Naive thymus-derived CD4-positive, alpha-beta T cell (primary cell): ENCODE measurements at regions of chr14 and their contacts with region 1.

Region 1: DNA sequence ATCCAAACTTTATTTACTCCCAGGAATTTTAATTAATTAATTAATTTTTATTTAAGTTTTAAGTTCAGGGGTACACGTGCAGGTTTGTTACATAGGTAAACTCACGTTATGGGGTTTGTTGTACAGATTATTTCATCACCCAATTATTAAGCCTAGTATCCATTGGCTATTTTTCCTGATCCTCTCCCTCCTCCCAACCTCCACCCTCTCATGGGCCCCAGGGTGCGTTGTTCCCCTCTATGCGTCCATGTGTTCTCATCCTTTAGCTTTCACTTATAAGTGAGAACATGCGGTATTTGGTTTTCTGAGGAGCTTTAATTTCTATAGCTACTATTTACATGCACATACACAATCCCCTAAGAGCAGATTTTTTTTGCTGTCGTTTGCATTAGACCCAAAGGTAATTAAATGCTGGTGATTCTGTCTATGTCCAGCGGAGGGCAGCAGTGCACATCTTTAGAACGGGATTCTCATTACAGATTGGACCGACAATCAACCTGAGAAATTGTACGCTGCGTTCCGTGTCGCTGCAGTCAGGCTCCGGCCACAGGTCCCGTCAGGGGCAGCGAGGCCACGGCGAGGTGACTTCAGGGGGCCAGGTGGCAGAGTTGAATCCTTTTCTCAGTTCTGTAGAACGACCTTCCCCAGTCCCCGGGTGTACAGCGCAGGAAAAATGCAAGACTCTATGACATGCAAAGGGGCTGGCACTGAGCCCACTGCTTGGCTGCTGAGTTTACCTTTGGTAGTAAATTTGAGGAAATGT is 11.6 kb downstream of the TMEM30B start:
- DNase-seq: peak; percentile 47 to 78 (median 71)
- ATAC-seq: peak; percentile 96
- H3K4me3 ChIP-seq: peak overlapping the region; percentile 58
- H3K4me3 Mint-ChIP-seq: peak overlapping the region; percentile 60 to 84 (median 77)
- H3K27ac ChIP-seq: no peak overlapping the region
- H3K27ac Mint-ChIP-seq: no peak overlapping the region
- H3K4me1 ChIP-seq: peaks cover 3% of the 10 kb centered on the region in 2 donors
- H3K4me1 Mint-ChIP-seq: peaks cover 0 to 8% (median 4%) of the 10 kb centered on the region in 7 donors
- H3K27me3 ChIP-seq: no peaks in the 10 kb centered on the region
- H3K27me3 Mint-ChIP-seq: peaks cover 27 to 65% (median 46%) of the 10 kb centered on the region in 5 donors

Region 2: DNA sequence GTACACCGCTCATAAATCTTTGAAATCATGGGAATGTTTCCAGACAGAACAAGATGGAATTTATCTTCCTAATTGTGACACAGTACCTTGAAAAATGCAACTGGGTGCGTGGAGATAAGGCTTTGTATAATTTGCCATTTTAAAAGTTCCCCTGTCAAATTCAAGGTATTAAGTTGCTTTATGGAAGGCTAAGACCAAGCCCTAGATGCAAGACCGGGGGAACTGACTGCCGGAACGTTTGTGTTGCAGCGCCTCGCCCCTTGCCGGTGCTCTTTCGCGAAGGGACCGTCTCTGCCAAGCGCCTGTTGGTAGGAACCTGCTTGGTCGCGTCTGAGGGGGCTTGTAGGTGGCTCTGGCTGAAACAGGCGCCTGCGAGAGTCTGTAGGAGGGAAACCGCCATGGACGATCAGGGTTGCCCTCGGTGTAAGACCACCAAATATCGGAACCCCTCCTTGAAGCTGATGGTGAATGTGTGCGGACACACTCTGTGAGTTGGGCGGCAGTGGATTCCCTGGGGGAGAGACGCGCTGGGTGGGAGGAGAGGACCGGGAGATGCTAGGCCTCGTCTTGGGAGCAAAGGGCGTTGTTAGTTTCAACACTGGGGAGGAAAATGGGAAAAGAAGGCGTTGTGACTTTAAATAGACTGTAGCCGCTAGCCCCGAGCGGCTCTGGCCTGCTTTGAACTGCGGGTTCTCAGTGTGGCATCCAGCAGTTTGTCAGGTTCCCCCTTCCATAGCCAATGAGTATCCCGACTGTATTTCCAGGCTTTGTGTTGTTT is 534.8 kb before region 1 on chr14 and contains the start of gene MNAT1:
- CTCF ChIA-PET with region 1: no interaction called
- POLR2A ChIA-PET with region 1: no interaction called
- intact Hi-C with region 1: loop called in 1 of 2 experiments (anchors 10 kb)
- DNase-seq: peak; percentile 65 to 81 (median 75)
- ATAC-seq: peak; percentile 95
- H3K4me3 ChIP-seq: peak within 1 kb of the TSS; percentile 64
- H3K4me3 Mint-ChIP-seq: peak within 1 kb of the TSS; percentile 95 to 100 (median 99)
- H3K27ac ChIP-seq: peak within 1 kb of the TSS; percentile 70
- H3K27ac Mint-ChIP-seq: peak within 1 kb of the TSS; percentile 88 to 99 (median 94)
- H3K4me1 ChIP-seq: peaks cover 0 to 10% of the 10 kb centered on the region in 2 donors
- H3K4me1 Mint-ChIP-seq: peaks cover 22 to 37% (median 29%) of the 10 kb centered on the region in 7 donors
- H3K27me3 ChIP-seq: peaks cover 0 to 4% of the 10 kb centered on the region in 2 donors
- H3K27me3 Mint-ChIP-seq: peaks cover 13 to 42% (median 22%) of the 10 kb centered on the region in 5 donors
- total RNA-seq, gene MNAT1: 16.0 to 39.1 (median 20.0) TPM

Region 3: GRCh38 chr14:61280526-61281185 is 11.2 kb after region 1 on chr14:
- CTCF ChIA-PET with region 1: interaction called, 13 read pairs
- POLR2A ChIA-PET with region 1: interaction called, 3 read pairs
- intact Hi-C with region 1: loop called in 1 of 2 experiments (anchors 1 kb)
- DNase-seq: peak; percentile 59 to 83 (median 79)
- ATAC-seq: peak; percentile 92
- H3K4me3 ChIP-seq: peak overlapping the region; percentile 87
- H3K4me3 Mint-ChIP-seq: peak overlapping the region; percentile 89 to 97 (median 91)
- H3K27ac ChIP-seq: peak overlapping the region; percentile 77
- H3K27ac Mint-ChIP-seq: peak overlapping the region; percentile 83 to 95 (median 93)
- H3K4me1 ChIP-seq: peaks cover 0 to 10% of the 10 kb centered on the region in 2 donors
- H3K4me1 Mint-ChIP-seq: peaks cover 18 to 54% (median 35%) of the 10 kb centered on the region in 7 donors
- H3K27me3 ChIP-seq: no peaks in the 10 kb centered on the region
- H3K27me3 Mint-ChIP-seq: peaks cover 0 to 52% (median 0%) of the 10 kb centered on the region in 5 donors

Region 4: GRCh38 chr14:61287196-61287595 is 17.7 kb after region 1 on chr14:
- CTCF ChIA-PET with region 1: interaction called, 9 read pairs
- POLR2A ChIA-PET with region 1: interaction called, 3 read pairs
- intact Hi-C with region 1: loop called (anchors 1 to 2 kb)
- DNase-seq: no peak
- ATAC-seq: no peak
- H3K4me3 ChIP-seq: no peak overlapping the region
- H3K4me3 Mint-ChIP-seq: no peak overlapping the region
- H3K27ac ChIP-seq: no peak overlapping the region
- H3K27ac Mint-ChIP-seq: no peak overlapping the region
- H3K4me1 ChIP-seq: no peaks in the 10 kb centered on the region
- H3K4me1 Mint-ChIP-seq: peaks cover 9 to 41% (median 28%) of the 10 kb centered on the region in 7 donors
- H3K27me3 ChIP-seq: no peaks in the 10 kb centered on the region
- H3K27me3 Mint-ChIP-seq: peaks cover 0 to 12% (median 0%) of the 10 kb centered on the region in 5 donors